Panc1 (cell line): ENCODE measurements at regions of chr19 and their contacts with region 1.

Region 1: GRCh38 chr19:44770550-44771257 is 7.0 kb upstream of the CBLC start:
- DNase-seq: peak; percentile 84
- ATAC-seq: peak; percentile 98
- H3K4me3 ChIP-seq: no peak overlapping the region
- H3K27ac ChIP-seq: peak overlapping the region; percentile 66
- H3K4me1 ChIP-seq: peaks cover 10% of the 10 kb centered on the region
- H3K27me3 ChIP-seq: no peaks in the 10 kb centered on the region
- CTCF ChIP-seq: peak; percentile 75; the same call in 1 of the 2 replicates

Region 2: DNA sequence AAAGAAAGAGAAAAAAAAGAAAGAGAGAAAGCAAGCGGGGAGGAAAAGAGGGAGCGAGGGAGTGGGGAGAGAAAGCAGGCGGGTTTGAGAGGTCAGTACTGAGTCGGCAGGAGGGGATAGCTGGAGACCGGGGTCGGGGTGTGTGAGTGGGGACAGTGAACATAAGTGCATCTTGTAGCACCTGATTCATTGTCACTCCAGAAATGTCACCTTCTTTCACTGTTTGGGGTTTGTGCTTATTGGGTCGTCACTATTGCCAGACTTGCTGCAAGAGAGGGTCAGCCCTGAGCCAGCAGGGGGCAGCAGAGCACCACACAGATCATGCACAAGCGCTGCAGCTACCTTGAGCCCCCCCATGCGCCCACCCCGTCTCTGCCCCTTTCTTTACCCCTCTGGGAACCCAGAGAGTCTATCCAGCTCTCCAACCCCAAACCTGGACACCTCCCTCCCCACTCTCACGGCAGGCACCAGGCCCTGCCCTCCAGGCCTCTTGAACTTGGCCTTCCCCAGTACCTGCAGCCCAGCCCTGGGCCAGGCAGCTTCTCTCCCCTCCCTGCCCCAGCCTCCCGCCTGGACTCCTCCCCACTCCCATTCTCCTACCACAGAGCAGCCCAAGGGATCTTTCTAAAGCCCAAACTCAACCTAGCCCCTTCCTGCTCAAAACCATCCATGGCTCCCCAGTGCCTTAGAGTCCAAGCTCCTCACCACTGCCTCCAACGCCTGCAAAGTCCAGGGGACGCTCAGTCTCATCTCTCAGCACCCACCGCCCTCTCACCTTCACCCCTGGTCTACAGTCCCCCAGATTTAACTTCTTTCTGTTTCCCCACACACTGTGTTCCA is 81.4 kb before region 1 on chr19:
- CTCF ChIA-PET with region 1: interaction called, 4 read pairs
- POLR2A ChIA-PET with region 1: interaction called, 3 read pairs
- in situ Hi-C with region 1: no loop called
- intact Hi-C with region 1: loop called (anchors 2 kb)
- DNase-seq: no peak
- ATAC-seq: peak; percentile 86
- H3K4me3 ChIP-seq: no peak overlapping the region
- H3K27ac ChIP-seq: peak overlapping the region; percentile 70
- H3K4me1 ChIP-seq: peaks cover 19% of the 10 kb centered on the region
- H3K27me3 ChIP-seq: no peaks in the 10 kb centered on the region
- CTCF ChIP-seq: peak; percentile 90

Region 3: DNA sequence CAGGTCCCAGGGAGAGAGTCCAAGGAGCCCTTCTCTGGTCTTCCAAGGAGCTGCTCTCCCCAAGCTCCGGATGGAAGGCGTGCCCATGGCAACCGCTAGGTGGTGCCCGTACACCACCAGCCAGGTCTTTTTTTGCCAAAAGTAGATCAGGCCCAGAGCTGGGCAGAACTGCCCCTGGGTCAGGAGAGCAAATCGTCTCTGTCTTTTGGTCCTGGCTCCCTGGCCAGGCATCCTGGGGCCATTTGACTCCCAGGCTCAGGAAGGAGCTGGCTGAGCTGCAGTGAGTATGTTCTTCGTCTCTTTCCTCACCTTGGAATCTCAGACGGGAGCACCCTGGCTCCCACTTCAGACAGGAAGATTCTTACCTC is 46.8 kb before region 1 on chr19:
- CTCF ChIA-PET with region 1: interaction called, 34 read pairs
- POLR2A ChIA-PET with region 1: interaction called, 6 read pairs
- in situ Hi-C with region 1: no loop called
- intact Hi-C with region 1: loop called (anchors 2 kb)
- DNase-seq: peak; percentile 73
- ATAC-seq: peak; percentile 81
- H3K4me3 ChIP-seq: no peak overlapping the region
- H3K27ac ChIP-seq: peak overlapping the region; percentile 77
- H3K4me1 ChIP-seq: peaks cover 41% of the 10 kb centered on the region
- H3K27me3 ChIP-seq: no peaks in the 10 kb centered on the region
- CTCF ChIP-seq: peak; percentile 94

Region 4: GRCh38 chr19:44757735-44758505 is 12.8 kb before region 1 on chr19:
- CTCF ChIA-PET with region 1: interaction called, 12 read pairs
- POLR2A ChIA-PET with region 1: no interaction called
- in situ Hi-C with region 1: no loop called
- intact Hi-C with region 1: no loop called
- DNase-seq: no peak
- ATAC-seq: no peak
- H3K4me3 ChIP-seq: no peak overlapping the region
- H3K27ac ChIP-seq: no peak overlapping the region
- H3K4me1 ChIP-seq: peaks cover 30% of the 10 kb centered on the region
- H3K27me3 ChIP-seq: no peaks in the 10 kb centered on the region
- CTCF ChIP-seq: no peak

Region 5: GRCh38 chr19:44845612-44846454 is 75.1 kb after region 1 on chr19 and contains the start of gene NECTIN2:
- CTCF ChIA-PET with region 1: interaction called, 4 read pairs
- POLR2A ChIA-PET with region 1: interaction called, 11 read pairs
- in situ Hi-C with region 1: no loop called
- intact Hi-C with region 1: no loop called
- DNase-seq: peak; percentile 81
- ATAC-seq: peak; percentile 75
- H3K4me3 ChIP-seq: peak within 1 kb of the TSS; percentile 92 to 93
- H3K27ac ChIP-seq: peak within 1 kb of the TSS; percentile 94
- H3K4me1 ChIP-seq: peaks cover 24% of the 10 kb centered on the region
- H3K27me3 ChIP-seq: no peaks in the 10 kb centered on the region
- CTCF ChIP-seq: no peak
- total RNA-seq, gene NECTIN2: 104 TPM

Region 6: GRCh38 chr19:44890366-44891015 is 119.8 kb after region 1 on chr19:
- CTCF ChIA-PET with region 1: interaction called, 10 read pairs
- POLR2A ChIA-PET with region 1: no interaction called
- in situ Hi-C with region 1: no loop called
- intact Hi-C with region 1: no loop called
- DNase-seq: peak; percentile 97
- ATAC-seq: peak; percentile 92
- H3K4me3 ChIP-seq: peak overlapping the region; percentile 42 to 65
- H3K27ac ChIP-seq: peak overlapping the region; percentile 93
- H3K4me1 ChIP-seq: peaks cover 7% of the 10 kb centered on the region; the same call in 1 of the 2 replicates
- H3K27me3 ChIP-seq: no peaks in the 10 kb centered on the region
- CTCF ChIP-seq: no peak